PC-9 (cell line): ENCODE measurements at regions of chr19 and their contacts with region 1.

Region 1: GRCh38 chr19:52993323-52994178 is 20.2 kb upstream of the ERVV-1 start:
- DNase-seq: peak; percentile 77 to 91
- H3K4me3 ChIP-seq: peak overlapping the region; percentile 50
- H3K27ac ChIP-seq: peak overlapping the region; percentile 36
- H3K4me1 ChIP-seq: peaks cover 25% of the 10 kb centered on the region; the same call in 1 of the 2 replicates
- H3K27me3 ChIP-seq: no peaks in the 10 kb centered on the region
- CTCF ChIP-seq: peak; percentile 87

Region 2: GRCh38 chr19:52007806-52008557 is 985.6 kb before region 1 on chr19 and contains the start of gene ZNF615:
- CTCF ChIA-PET with region 1: no interaction called
- POLR2A ChIA-PET with region 1: no interaction called
- intact Hi-C with region 1: no loop called
- DNase-seq: peak; percentile 69 to 87
- H3K4me3 ChIP-seq: peak within 1 kb of the TSS; percentile 95
- H3K27ac ChIP-seq: peak within 1 kb of the TSS; percentile 34
- H3K4me1 ChIP-seq: peaks cover 8% of the 10 kb centered on the region
- H3K27me3 ChIP-seq: no peaks in the 10 kb centered on the region
- CTCF ChIP-seq: no peak
- total RNA-seq, gene ZNF615: 5.3 and 8.5 TPM in 2 replicates

Region 3: GRCh38 chr19:52897144-52897935 is 96.2 kb before region 1 on chr19 and contains the start of gene ZNF320:
- CTCF ChIA-PET with region 1: no interaction called
- POLR2A ChIA-PET with region 1: no interaction called
- intact Hi-C with region 1: loop called (anchors 5 kb)
- DNase-seq: peak; percentile 86 to 97
- H3K4me3 ChIP-seq: peak within 1 kb of the TSS; percentile 84
- H3K27ac ChIP-seq: peak within 1 kb of the TSS; percentile 86
- H3K4me1 ChIP-seq: peaks cover 9% of the 10 kb centered on the region; the same call in 1 of the 2 replicates
- H3K27me3 ChIP-seq: no peaks in the 10 kb centered on the region
- CTCF ChIP-seq: no peak
- total RNA-seq, gene ZNF320: 18.5 and 24.9 TPM in 2 replicates

Region 4: DNA sequence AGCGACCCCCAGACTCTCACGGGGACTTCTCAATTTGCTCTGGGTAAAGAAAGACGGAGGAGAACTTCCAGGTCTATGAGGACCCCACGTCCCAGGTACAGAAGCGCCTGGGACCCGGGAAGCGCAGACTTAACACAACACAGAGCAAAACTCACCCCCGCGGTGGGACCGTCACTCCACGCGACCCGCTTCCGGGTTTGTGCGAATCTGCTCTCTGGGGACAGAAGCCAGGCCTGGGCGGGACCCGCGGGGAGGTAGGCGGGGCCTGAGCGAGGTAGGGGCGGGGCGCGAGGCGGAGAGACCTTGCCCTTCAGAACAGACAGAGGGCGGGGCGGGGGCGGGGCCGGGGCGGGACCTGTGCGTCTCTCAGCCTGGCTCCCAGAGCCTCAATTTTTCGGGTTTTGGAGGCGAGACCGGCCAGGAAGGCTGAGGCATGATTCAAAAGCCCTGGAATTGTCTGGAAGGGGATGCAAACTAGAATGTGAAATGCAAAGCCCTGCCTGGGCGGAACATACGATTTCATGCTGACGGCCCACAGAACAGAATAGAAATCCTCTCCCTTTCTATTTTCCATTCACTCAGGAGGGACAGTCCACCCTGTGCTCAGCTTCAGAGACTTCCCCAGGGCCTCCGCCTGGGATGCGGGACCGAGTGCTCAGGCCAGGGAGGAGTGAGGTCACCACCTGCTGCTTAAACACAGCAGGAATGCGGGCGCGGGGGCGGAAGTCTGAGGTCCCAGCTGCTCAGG is 51.0 kb before region 1 on chr19:
- CTCF ChIA-PET with region 1: no interaction called
- POLR2A ChIA-PET with region 1: interaction called, 3 read pairs
- intact Hi-C with region 1: loop called (anchors 5 kb)
- DNase-seq: peak; percentile 81 to 99
- H3K4me3 ChIP-seq: peak overlapping the region; percentile 64
- H3K27ac ChIP-seq: peak overlapping the region; percentile 28; the same call in 1 of the 2 replicates
- H3K4me1 ChIP-seq: peaks cover 26% of the 10 kb centered on the region
- H3K27me3 ChIP-seq: no peaks in the 10 kb centered on the region
- CTCF ChIP-seq: no peak

Region 5: DNA sequence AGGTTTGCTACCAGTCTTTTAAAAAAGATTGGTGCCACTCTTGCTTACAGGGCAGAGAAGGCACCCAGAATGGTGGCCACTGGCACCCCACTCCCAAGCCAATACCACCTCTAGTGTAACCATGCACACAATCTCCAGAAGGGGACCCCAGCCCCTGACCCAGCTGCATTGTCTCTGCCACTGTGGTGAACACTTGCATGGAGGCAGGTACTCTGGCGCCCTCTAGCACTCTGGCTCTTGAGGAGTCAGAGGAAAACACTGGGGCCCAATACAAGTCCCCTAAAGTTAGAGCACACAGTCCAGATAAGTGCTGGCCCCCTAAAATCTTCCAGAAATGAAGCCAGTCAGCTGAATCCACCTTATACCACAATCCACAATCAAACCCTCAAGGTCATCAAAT is 26.1 kb after region 1 on chr19:
- CTCF ChIA-PET with region 1: no interaction called
- POLR2A ChIA-PET with region 1: no interaction called
- intact Hi-C with region 1: no loop called
- DNase-seq: no peak
- H3K4me3 ChIP-seq: no peak overlapping the region
- H3K27ac ChIP-seq: no peak overlapping the region
- H3K4me1 ChIP-seq: no peaks in the 10 kb centered on the region
- H3K27me3 ChIP-seq: no peaks in the 10 kb centered on the region
- CTCF ChIP-seq: peak; percentile 36; the same call in 1 of the 2 replicates

Region 6: GRCh38 chr19:53037101-53038097 is 43.8 kb after region 1 on chr19:
- CTCF ChIA-PET with region 1: no interaction called
- POLR2A ChIA-PET with region 1: no interaction called
- intact Hi-C with region 1: loop called (anchors 1 kb)
- DNase-seq: peak; percentile 51 to 70
- H3K4me3 ChIP-seq: peak overlapping the region; percentile 97
- H3K27ac ChIP-seq: no peak overlapping the region
- H3K4me1 ChIP-seq: no peaks in the 10 kb centered on the region; the same call in 1 of the 2 replicates
- H3K27me3 ChIP-seq: no peaks in the 10 kb centered on the region
- CTCF ChIP-seq: no peak

Region 7: GRCh38 chr19:53057904-53058580 is 64.5 kb after region 1 on chr19:
- CTCF ChIA-PET with region 1: no interaction called
- POLR2A ChIA-PET with region 1: no interaction called
- intact Hi-C with region 1: no loop called
- DNase-seq: peak in 1 of 2 experiments; percentile 62
- H3K4me3 ChIP-seq: peak overlapping the region; percentile 41; the same call in 1 of the 2 replicates
- H3K27ac ChIP-seq: no peak overlapping the region
- H3K4me1 ChIP-seq: no peaks in the 10 kb centered on the region
- H3K27me3 ChIP-seq: no peaks in the 10 kb centered on the region
- CTCF ChIP-seq: no peak

Region 8: DNA sequence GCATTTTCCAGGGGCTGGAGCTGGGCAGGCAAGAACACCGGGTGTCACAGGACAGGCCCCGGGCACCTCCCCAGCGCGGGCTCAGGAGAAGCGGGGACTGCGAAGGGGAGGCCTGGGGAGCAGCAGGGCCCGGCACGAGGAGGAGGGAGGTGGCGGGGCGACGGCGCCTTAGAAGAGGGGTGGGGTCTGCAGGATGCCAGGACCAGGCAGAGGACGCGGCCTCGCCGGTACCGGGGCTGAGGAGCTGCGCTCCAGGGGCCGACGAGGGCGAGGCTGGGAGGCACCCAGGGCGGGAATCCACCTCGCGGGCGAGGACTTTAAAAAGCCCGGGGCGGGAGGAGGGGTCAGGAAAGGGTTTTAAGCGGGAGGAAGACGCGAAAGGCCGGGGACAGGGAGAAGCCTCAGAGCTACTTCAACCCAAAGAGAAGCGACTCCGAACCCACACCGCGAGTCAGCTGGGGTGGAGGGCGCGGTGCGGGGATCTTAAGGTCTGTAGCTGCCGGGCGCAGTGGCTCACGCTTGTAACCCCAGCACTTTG is 164.6 kb after region 1 on chr19:
- CTCF ChIA-PET with region 1: no interaction called
- POLR2A ChIA-PET with region 1: no interaction called
- intact Hi-C with region 1: loop called (anchors 10 kb)
- DNase-seq: peak in 1 of 2 experiments; percentile 51
- H3K4me3 ChIP-seq: peak overlapping the region; percentile 93
- H3K27ac ChIP-seq: no peak overlapping the region
- H3K4me1 ChIP-seq: peaks cover 3% of the 10 kb centered on the region; the same call in 1 of the 2 replicates
- H3K27me3 ChIP-seq: no peaks in the 10 kb centered on the region
- CTCF ChIP-seq: no peak